ENCODE measurements at regions of chr11 and their contacts with region 1.

Region 1: GRCh38 chr11:62880803-62881578 is at the start of gene SLC3A2:
- DNase-seq: peak; percentile 89
- H3K4me3 ChIP-seq: peak within 1 kb of the TSS; percentile 82 to 91
- H3K27ac ChIP-seq: peak within 1 kb of the TSS; percentile 94 to 98
- H3K4me1 ChIP-seq: peaks cover 32 to 44% of the 10 kb centered on the region in 2 experiments
- H3K27me3 ChIP-seq: no peaks in the 10 kb centered on the region
- CTCF ChIP-seq: peak; percentile 67
- EP300 ChIP-seq: no peak
- RAD21 ChIP-seq: peak; percentile 57
- polyA plus RNA-seq, gene SLC3A2: 212 and 308 TPM in 2 replicates

Region 2: GRCh38 chr11:62573592-62574362 is 307.2 kb before region 1 on chr11 and contains the start of gene EEF1G:
- CTCF ChIA-PET with region 1: no interaction called
- POLR2A ChIA-PET with region 1: no interaction called
- DNase-seq: peak; percentile 99
- H3K4me3 ChIP-seq: peak within 1 kb of the TSS; percentile 83 to 93
- H3K27ac ChIP-seq: peak within 1 kb of the TSS; percentile 83 to 87
- H3K4me1 ChIP-seq: peaks cover 19 to 28% of the 10 kb centered on the region in 2 experiments; a peak in 3 of 4 replicates
- H3K27me3 ChIP-seq: no peaks in the 10 kb centered on the region
- CTCF ChIP-seq: no peak
- EP300 ChIP-seq: peak; percentile 15 to 41; a peak in 2 of 4 replicates
- RAD21 ChIP-seq: no peak
- polyA plus RNA-seq, gene EEF1G: 1,853 and 2,105 TPM in 2 replicates

Region 3: DNA sequence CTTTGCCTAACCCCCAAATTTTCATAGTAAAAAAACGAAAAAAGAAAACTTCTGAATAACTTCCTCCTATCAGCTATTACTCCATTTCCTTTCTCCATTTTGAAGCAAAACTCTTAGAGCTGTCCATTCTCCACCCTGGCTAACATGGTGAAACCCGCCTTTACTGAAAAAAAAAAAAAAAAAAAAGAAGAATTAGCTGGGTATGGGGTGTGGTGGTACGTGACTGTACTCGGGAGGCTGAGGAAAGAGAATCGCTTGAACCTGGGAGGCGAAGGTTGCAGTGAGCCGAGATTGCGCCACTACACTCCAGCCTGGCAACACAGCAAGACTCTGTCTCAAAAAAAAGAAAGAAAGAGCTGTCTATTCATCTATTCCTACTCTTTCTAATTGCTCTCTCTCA is 64.4 kb before region 1 on chr11:
- CTCF ChIA-PET with region 1: no interaction called
- POLR2A ChIA-PET with region 1: no interaction called
- DNase-seq: no peak
- H3K4me3 ChIP-seq: no peak overlapping the region
- H3K27ac ChIP-seq: no peak overlapping the region
- H3K4me1 ChIP-seq: no peaks in the 10 kb centered on the region
- H3K27me3 ChIP-seq: no peaks in the 10 kb centered on the region
- CTCF ChIP-seq: no peak
- EP300 ChIP-seq: no peak
- RAD21 ChIP-seq: no peak

Region 4: GRCh38 chr11:62831520-62832335 is 49.3 kb before region 1 on chr11 and contains the start of gene STX5:
- CTCF ChIA-PET with region 1: interaction called, 4 read pairs
- POLR2A ChIA-PET with region 1: interaction called, 10 read pairs
- DNase-seq: peak; percentile 96
- H3K4me3 ChIP-seq: peak within 1 kb of the TSS; percentile 76 to 99
- H3K27ac ChIP-seq: peak within 1 kb of the TSS; percentile 89 to 93
- H3K4me1 ChIP-seq: peaks cover 0 to 20% of the 10 kb centered on the region in 2 experiments; a peak in 3 of 4 replicates
- H3K27me3 ChIP-seq: no peaks in the 10 kb centered on the region
- CTCF ChIP-seq: no peak
- EP300 ChIP-seq: no peak
- RAD21 ChIP-seq: no peak
- polyA plus RNA-seq, gene STX5: 24.2 and 27.4 TPM in 2 replicates

Region 5: GRCh38 chr11:62860835-62861563 is 20.0 kb before region 1 on chr11:
- CTCF ChIA-PET with region 1: interaction called, 13 read pairs
- POLR2A ChIA-PET with region 1: interaction called, 11 read pairs
- DNase-seq: no peak
- H3K4me3 ChIP-seq: no peak overlapping the region
- H3K27ac ChIP-seq: no peak overlapping the region
- H3K4me1 ChIP-seq: peaks cover 6% of the 10 kb centered on the region in 2 experiments; a peak in 2 of 4 replicates
- H3K27me3 ChIP-seq: no peaks in the 10 kb centered on the region
- CTCF ChIP-seq: no peak
- EP300 ChIP-seq: no peak
- RAD21 ChIP-seq: no peak

Measured in SK-N-SH (cell line).